AG04450 (cell line): ENCODE measurements at regions of chr9 and their contacts with region 1.

Region 1: DNA sequence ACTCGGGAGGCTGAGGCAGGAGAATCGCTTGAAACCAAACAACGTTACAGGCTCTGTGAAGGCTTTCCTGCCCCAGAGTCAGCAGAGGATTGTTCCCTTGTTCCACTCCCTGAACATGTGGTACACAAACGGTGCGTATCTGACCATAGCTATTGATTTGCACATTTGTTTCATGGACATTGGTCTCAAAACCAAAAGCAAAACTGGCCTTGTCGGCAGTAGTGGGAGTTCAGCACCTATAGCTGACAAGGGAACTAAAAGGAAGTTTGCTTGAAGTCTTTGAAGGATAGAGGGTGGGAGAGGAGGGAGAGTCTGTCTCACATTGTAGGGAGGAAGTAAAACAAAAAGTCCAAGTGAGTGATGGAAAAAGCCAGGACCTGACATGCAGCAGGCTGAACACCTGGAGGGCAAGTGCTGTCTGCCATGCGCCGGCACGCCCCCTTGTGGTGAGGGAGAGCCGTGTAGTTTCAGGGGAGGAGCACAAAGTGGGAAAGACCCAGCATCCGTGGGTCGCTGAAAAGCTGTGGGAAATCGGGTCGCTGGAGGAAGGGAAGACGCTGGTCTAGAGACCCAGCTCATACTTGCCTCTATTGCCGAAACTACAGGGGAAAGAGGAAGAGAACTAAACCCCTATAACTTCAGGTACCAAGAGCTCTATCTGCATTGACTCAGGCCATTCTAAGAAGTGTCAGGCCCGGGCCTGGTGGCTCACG is 58.0 kb downstream of the RAD23B start:
- DNase-seq: peak; percentile 27
- H3K4me3 ChIP-seq: no peak overlapping the region
- H3K27ac ChIP-seq: no peak overlapping the region
- H3K27me3 ChIP-seq: no peaks in the 10 kb centered on the region
- CTCF ChIP-seq: peak; percentile 93

Region 2: DNA sequence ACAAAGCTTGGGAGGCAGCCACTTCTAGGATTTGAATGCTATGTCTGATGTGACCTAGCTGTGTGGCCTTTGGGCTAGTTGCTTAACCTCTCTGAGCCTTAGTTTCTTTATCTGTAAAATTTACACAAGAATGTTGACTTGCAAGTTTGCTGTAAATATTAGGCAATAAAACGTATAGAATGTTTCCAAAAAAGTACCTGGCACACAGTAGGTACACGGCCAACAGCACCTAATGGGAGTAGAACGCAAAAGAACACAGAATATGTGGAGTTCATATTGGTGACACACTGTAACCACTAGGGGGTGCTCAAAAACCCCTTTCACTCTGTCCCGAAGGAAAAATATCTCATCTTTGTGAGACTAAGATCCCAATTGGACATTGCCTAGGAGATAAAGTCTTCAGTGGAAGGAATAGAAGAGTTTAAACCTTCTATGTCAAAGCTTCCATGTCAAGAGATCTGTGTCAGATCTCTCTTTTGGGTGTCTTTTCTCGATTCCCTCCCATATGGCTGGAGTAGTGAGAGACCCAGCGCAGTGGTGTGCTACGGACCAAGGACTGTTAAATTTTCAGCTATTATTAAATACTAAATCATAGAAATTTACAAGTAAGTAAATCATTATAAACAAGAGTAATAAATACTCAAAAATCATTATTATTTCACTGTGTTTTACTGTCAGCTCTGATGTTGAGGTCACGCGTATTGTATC is 203.4 kb before region 1 on chr9:
- CTCF ChIA-PET with region 1: interaction called, 40 read pairs
- POLR2A ChIA-PET with region 1: no interaction called
- DNase-seq: no peak
- H3K4me3 ChIP-seq: no peak overlapping the region
- H3K27ac ChIP-seq: no peak overlapping the region
- H3K27me3 ChIP-seq: peaks cover 9% of the 10 kb centered on the region
- CTCF ChIP-seq: peak; percentile 79

Region 3: DNA sequence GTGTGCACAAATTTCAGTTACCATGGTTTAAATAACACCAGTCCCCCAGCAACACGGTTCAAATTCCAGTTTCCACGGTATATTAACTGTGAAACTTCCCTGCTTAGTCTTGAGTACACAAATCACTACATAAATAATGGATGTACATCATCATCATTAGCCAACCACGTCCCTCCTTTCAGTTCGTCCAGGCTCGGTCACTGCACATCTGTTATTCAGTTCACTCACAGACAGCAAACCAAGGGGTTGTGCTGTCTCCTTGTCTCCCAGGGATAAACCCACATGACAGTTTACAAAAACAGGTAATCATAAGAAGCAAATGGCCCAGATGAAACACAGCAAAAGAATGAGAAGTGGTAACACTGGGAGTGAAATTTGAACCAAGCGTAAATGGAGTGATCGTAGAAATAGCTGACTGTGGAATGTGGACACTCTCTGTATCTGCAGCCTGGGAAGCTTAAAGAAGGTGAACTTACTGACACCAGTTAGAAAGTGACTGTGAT is 119.0 kb before region 1 on chr9:
- CTCF ChIA-PET with region 1: interaction called, 37 read pairs
- POLR2A ChIA-PET with region 1: no interaction called
- DNase-seq: no peak
- H3K4me3 ChIP-seq: peak overlapping the region; percentile 53
- H3K27ac ChIP-seq: no peak overlapping the region
- H3K27me3 ChIP-seq: no peaks in the 10 kb centered on the region
- CTCF ChIP-seq: no peak

Region 4: GRCh38 chr9:107282753-107283625 is 58.1 kb before region 1 on chr9 and contains the start of gene RAD23B:
- CTCF ChIA-PET with region 1: interaction called, 10 read pairs
- POLR2A ChIA-PET with region 1: interaction called, 5 read pairs
- DNase-seq: peak; percentile 97
- H3K4me3 ChIP-seq: peak within 1 kb of the TSS; percentile 94
- H3K27ac ChIP-seq: peak within 1 kb of the TSS; percentile 86
- H3K27me3 ChIP-seq: no peaks in the 10 kb centered on the region
- CTCF ChIP-seq: no peak
- polyA plus RNA-seq, gene RAD23B: 214 and 224 TPM in 2 replicates

Region 5: DNA sequence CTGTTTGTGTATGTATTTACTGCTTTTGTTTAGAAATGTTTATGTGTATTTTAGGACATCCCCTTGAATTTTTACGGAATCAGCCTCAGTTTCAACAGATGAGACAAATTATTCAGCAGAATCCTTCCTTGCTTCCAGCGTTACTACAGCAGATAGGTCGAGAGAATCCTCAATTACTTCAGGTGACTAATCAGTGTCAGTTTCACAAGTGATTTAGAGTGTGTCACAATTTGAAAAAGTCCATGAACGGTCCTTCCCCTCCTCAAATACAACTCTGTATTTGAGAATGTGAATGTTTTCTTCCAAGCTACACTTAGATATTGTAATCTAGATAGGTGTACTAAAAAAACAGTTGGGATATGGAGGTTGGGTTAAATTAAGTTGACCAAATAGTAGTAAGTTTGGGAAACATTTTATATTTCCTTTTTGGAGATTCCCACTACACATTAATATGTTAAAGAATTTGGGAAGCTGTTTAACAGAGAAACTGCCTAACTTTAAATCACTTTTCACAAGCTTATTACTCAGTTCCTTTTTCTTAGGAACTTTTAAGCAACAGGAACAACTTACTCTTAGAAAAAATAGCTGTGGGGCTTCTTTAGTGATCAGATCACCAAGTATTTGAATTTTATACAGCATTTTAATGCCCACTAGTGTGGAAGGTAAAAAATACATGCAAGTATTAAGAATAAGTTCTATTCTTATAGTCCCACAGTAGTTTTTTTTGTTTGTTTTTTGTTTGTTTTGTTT is 17.1 kb before region 1 on chr9:
- CTCF ChIA-PET with region 1: interaction called, 44 read pairs
- POLR2A ChIA-PET with region 1: no interaction called
- DNase-seq: no peak
- H3K4me3 ChIP-seq: no peak overlapping the region
- H3K27ac ChIP-seq: no peak overlapping the region
- H3K27me3 ChIP-seq: no peaks in the 10 kb centered on the region
- CTCF ChIP-seq: no peak